HCT116 (cell line): ENCODE measurements at regions of chr2 and their contacts with region 1.

Region 1: DNA sequence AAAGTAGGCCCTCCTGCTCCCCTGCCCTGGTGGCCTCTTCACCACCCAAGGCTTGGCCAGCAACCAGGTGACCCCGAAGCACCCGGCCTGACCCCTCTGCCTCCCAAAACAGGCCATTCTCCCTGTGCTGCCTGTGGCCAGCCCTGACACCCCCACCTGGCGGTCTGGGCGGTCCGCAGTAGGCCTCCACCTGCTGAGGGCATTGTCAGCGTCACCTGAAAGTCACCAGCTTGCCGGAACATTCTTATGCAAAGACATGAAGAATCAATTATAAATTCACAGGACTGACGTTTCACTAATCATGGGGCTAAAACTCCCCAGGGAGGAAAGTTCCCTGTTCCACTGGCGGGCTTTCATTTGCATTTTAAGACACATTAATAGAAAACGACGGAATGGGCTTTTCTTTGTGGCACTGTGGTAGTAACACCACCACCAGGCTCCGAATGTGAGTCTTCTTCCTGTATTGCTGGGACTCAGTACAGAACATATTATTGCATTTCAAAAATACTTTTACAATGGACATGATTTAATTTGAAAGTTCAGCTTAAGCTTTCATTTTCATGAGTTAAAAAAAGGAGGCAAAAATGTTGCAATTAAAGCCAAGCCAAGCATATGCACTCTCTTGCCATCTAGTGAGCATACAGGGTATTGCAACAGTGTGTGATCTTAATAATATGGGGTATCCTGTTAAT is 57.4 kb downstream of the ADI1 start:
- DNase-seq: peak; percentile 28
- ATAC-seq: peak; percentile 66
- H3K4me3 ChIP-seq: no peak overlapping the region
- H3K27ac ChIP-seq: no peak overlapping the region
- H3K4me1 ChIP-seq: no peaks in the 10 kb centered on the region
- H3K27me3 ChIP-seq: no peaks in the 10 kb centered on the region
- CTCF ChIP-seq: peak; percentile 58 to 92 (median 85)
- POLR2A ChIP-seq: no peak
- RAD21 ChIP-seq: peak; percentile 61

Region 2: DNA sequence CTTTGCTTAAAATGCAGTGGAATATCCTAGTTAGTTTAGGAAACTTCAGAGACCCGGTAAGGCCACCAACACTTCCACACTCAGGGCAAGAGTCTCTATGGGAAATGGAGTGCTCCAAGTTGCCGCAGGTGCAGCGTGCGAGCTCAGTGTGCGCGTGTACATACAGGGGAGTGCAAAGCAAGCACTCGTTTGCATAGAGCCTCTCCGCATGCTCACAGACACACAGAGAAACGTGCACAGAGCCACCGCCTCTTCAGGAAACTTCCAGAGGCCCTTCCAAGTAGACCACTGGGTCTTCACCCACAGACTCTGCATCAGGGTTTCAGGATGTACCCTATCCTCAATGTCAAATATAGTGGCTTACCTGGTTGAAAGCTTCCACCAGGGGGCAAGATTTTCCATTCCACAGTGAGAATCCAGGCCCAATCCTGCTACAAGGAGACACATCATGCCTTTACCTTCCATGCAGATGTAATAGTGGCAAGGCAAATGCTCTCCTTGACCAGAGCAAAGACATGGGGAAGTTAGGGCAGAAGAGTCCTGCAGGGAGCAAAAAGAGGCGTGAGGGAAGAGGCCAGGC is 617.9 kb before region 1 on chr2:
- CTCF ChIA-PET with region 1: no interaction called
- POLR2A ChIA-PET with region 1: no interaction called
- RAD21 ChIA-PET with region 1: no interaction called
- intact Hi-C with region 1: loop called (anchors 2 kb)
- DNase-seq: peak; percentile 7
- ATAC-seq: peak; percentile 69
- H3K4me3 ChIP-seq: no peak overlapping the region
- H3K27ac ChIP-seq: no peak overlapping the region
- H3K4me1 ChIP-seq: peaks cover 11 to 12% of the 10 kb centered on the region in 2 experiments; a peak in 3 of 4 replicates
- H3K27me3 ChIP-seq: peaks cover 3% of the 10 kb centered on the region; the same call in 1 of the 2 replicates
- CTCF ChIP-seq: peak; percentile 29 to 57 (median 54); a peak in 4 of 6 replicates
- POLR2A ChIP-seq: no peak
- RAD21 ChIP-seq: peak; percentile 52

Region 3: GRCh38 chr2:3214827-3215404 is 247.0 kb before region 1 on chr2:
- CTCF ChIA-PET with region 1: no interaction called
- POLR2A ChIA-PET with region 1: no interaction called
- RAD21 ChIA-PET with region 1: no interaction called
- intact Hi-C with region 1: no loop called
- DNase-seq: no peak
- ATAC-seq: no peak
- H3K4me3 ChIP-seq: no peak overlapping the region
- H3K27ac ChIP-seq: no peak overlapping the region
- H3K4me1 ChIP-seq: no peaks in the 10 kb centered on the region
- H3K27me3 ChIP-seq: no peaks in the 10 kb centered on the region
- CTCF ChIP-seq: no peak
- POLR2A ChIP-seq: no peak
- RAD21 ChIP-seq: no peak

Region 4: GRCh38 chr2:3423492-3424175 is 38.3 kb before region 1 on chr2:
- CTCF ChIA-PET with region 1: no interaction called
- POLR2A ChIA-PET with region 1: no interaction called
- RAD21 ChIA-PET with region 1: no interaction called
- intact Hi-C with region 1: loop called (anchors 1 kb)
- DNase-seq: peak; percentile 27
- ATAC-seq: peak; percentile 96
- H3K4me3 ChIP-seq: no peak overlapping the region
- H3K27ac ChIP-seq: no peak overlapping the region
- H3K4me1 ChIP-seq: no peaks in the 10 kb centered on the region
- H3K27me3 ChIP-seq: no peaks in the 10 kb centered on the region
- CTCF ChIP-seq: peak; percentile 67 to 99 (median 98); a peak in 5 of 6 replicates
- POLR2A ChIP-seq: no peak
- RAD21 ChIP-seq: peak; percentile 61; the same call in 1 of the 2 replicates